CD4-positive, alpha-beta T cell (primary cell): ENCODE measurements at regions of chr1 and their contacts with region 1.

Region 1: DNA sequence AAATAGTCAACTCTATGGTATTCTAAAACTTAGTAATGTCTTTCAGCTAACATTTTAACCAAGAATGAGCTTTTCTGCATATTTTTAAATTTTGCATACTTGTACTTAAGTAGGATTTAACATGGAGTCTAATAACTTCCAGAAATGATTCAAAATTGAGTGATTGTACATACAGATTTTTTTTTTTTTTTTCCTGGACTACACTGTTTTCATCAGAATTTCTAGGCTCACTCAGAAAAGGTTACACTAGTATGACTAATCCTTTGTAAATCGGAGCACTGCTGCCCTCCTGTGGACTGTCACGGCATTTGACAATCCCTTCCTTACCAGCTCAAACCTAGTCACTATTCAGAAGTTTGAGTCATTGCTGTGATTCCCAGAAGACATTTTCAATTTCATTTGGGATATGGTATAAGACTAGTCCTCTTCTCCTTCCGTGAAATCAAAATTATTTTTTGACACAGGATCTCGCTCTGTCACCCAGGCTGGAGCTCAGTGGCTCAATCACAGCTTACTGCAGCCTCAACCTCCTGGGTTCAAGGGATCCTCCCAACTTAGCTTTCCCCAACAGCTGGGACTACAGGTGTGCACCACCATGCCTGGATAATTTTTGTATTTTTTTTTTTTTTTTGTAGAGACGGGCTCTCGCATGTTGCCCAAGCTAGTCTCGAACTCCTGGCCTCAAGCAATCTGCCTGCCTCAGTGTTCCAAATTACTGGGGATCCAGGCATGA is 45.5 kb downstream of the CD46 start:
- DNase-seq: peak; percentile 59 to 87 (median 74)
- ATAC-seq: peak; percentile 90
- H3K4me3 ChIP-seq: no peak overlapping the region
- H3K4me3 Mint-ChIP-seq: no peak overlapping the region
- H3K27ac ChIP-seq: no peak overlapping the region
- H3K27ac Mint-ChIP-seq: peak overlapping the region; percentile 50
- H3K4me1 ChIP-seq: peaks cover 24% of the 10 kb centered on the region
- H3K4me1 Mint-ChIP-seq: peaks cover 50% of the 10 kb centered on the region
- H3K27me3 ChIP-seq: no peaks in the 10 kb centered on the region
- H3K27me3 Mint-ChIP-seq: no peaks in the 10 kb centered on the region
- CTCF ChIP-seq: peak; percentile 85

Region 2: GRCh38 chr1:207654320-207654719 is 143.1 kb before region 1 on chr1:
- CTCF ChIA-PET with region 1: no interaction called
- POLR2A ChIA-PET with region 1: no interaction called
- intact Hi-C with region 1: loop called (anchors 5 to 10 kb)
- DNase-seq: no peak
- ATAC-seq: no peak
- H3K4me3 ChIP-seq: no peak overlapping the region
- H3K4me3 Mint-ChIP-seq: no peak overlapping the region
- H3K27ac ChIP-seq: no peak overlapping the region
- H3K27ac Mint-ChIP-seq: no peak overlapping the region
- H3K4me1 ChIP-seq: no peaks in the 10 kb centered on the region
- H3K4me1 Mint-ChIP-seq: no peaks in the 10 kb centered on the region
- H3K27me3 ChIP-seq: no peaks in the 10 kb centered on the region
- H3K27me3 Mint-ChIP-seq: peaks cover 13% of the 10 kb centered on the region
- CTCF ChIP-seq: no peak

Region 3: DNA sequence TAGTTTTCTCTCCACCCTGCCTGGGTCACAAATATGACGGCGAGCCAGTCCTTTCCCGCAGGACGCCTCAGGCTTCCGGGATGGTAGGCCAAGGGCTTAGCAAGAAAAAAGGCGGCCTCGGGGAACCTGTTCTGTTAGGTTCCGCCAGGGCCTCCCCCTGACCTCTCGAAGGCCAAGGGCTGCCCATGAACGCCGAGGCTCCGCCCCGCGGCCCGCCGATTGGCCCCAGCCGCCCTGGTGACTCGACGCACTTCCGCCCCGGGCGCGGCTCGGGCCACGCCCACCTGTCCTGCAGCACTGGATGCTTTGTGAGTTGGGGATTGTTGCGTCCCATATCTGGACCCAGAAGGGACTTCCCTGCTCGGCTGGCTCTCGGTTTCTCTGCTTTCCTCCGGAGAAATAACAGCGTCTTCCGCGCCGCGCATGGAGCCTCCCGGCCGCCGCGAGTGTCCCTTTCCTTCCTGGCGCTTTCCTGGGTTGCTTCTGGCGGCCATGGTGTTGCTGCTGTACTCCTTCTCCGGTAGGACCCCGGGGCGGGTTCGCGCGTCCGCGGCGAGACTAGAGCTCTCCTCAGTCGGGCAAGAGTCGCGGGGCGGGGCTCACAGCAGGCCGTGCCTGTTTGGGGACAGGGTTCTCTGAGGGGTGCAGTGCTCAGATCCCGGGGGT is 45.5 kb before region 1 on chr1 and contains the start of gene CD46:
- CTCF ChIA-PET with region 1: interaction called, 4 read pairs
- POLR2A ChIA-PET with region 1: no interaction called
- intact Hi-C with region 1: loop called in 1 of 2 experiments (anchors 5 kb)
- DNase-seq: peak; percentile 85 to 97 (median 92)
- ATAC-seq: peak; percentile 95
- H3K4me3 ChIP-seq: peak within 1 kb of the TSS; percentile 97
- H3K4me3 Mint-ChIP-seq: peak within 1 kb of the TSS; percentile 95
- H3K27ac ChIP-seq: peak within 1 kb of the TSS; percentile 66 to 85
- H3K27ac Mint-ChIP-seq: peak within 1 kb of the TSS; percentile 89
- H3K4me1 ChIP-seq: peaks cover 35% of the 10 kb centered on the region
- H3K4me1 Mint-ChIP-seq: peaks cover 84% of the 10 kb centered on the region
- H3K27me3 ChIP-seq: no peaks in the 10 kb centered on the region
- H3K27me3 Mint-ChIP-seq: no peaks in the 10 kb centered on the region
- CTCF ChIP-seq: no peak
- total RNA-seq, gene CD46: 111 to 115 TPM

Region 4: DNA sequence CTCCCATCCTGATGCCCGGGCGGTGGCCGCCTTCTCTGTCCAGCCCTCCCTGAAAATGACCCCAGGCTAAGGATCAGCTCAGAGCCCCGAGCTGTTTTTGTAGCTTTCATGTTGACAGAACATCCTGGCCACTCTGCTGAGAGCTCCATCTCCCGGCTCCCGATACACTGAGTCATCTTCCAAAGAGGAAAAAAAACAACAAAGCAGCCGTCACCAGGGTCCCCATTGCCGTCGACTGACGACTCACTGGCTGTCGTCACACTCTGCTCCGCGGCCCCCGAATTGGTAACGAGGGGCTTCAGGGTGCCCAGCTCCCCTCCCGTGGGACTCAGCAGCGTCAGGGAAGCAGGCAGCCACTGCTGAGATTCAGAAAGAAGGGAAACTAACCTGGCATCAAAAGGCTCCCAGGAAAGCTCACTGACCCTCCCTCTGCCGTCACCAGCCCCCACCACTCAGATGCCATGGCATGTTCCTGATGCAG is 21.6 kb after region 1 on chr1:
- CTCF ChIA-PET with region 1: interaction called, 26 read pairs
- POLR2A ChIA-PET with region 1: interaction called, 31 read pairs
- intact Hi-C with region 1: no loop called
- DNase-seq: no peak
- ATAC-seq: no peak
- H3K4me3 ChIP-seq: no peak overlapping the region
- H3K4me3 Mint-ChIP-seq: no peak overlapping the region
- H3K27ac ChIP-seq: no peak overlapping the region
- H3K27ac Mint-ChIP-seq: peak overlapping the region; percentile 73
- H3K4me1 ChIP-seq: peaks cover 90% of the 10 kb centered on the region
- H3K4me1 Mint-ChIP-seq: peaks cover 76% of the 10 kb centered on the region
- H3K27me3 ChIP-seq: no peaks in the 10 kb centered on the region
- H3K27me3 Mint-ChIP-seq: peaks cover 4% of the 10 kb centered on the region
- CTCF ChIP-seq: no peak

Region 5: GRCh38 chr1:207868774-207869721 is 71.7 kb after region 1 on chr1:
- CTCF ChIA-PET with region 1: interaction called, 11 read pairs
- POLR2A ChIA-PET with region 1: interaction called, 3 read pairs
- intact Hi-C with region 1: no loop called
- DNase-seq: peak; percentile 43 to 92 (median 67)
- ATAC-seq: peak; percentile 63
- H3K4me3 ChIP-seq: peak overlapping the region; percentile 98
- H3K4me3 Mint-ChIP-seq: peak overlapping the region; percentile 95
- H3K27ac ChIP-seq: peak overlapping the region; percentile 74 to 89
- H3K27ac Mint-ChIP-seq: peak overlapping the region; percentile 95
- H3K4me1 ChIP-seq: peaks cover 87% of the 10 kb centered on the region
- H3K4me1 Mint-ChIP-seq: peaks cover 85% of the 10 kb centered on the region
- H3K27me3 ChIP-seq: no peaks in the 10 kb centered on the region
- H3K27me3 Mint-ChIP-seq: no peaks in the 10 kb centered on the region
- CTCF ChIP-seq: peak; percentile 60

Region 6: DNA sequence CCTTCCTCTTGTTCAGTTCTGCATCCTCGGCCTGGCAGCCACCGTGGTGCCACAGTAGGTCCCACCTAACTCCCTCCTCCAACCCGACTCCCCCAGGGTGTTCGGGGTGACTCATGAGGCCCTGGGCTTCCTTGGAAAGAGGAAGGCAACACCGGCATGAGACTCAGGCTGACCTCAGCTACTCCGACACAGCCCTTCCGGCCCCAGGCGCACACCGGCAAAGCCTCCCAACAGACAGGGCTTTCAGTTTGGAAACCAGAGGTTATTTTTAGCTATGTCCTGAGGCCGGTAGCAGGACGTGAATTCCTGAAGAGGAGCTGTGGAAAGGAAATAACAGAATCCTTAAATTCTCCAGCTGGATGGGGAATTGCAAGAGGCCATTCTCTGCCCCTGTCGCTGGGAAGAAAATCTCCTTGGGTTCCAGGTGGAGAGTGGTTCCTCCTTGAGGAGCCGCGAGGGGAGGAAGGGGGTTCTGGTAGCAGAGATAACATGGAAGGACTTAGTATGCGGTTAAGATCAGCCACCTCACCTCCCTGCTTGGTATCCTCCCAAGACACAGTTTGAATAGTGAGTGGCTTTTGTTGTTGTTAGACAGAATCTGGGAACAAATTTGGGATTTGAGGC is 422.4 kb after region 1 on chr1:
- CTCF ChIA-PET with region 1: no interaction called
- POLR2A ChIA-PET with region 1: no interaction called
- intact Hi-C with region 1: no loop called
- DNase-seq: no peak
- ATAC-seq: no peak
- H3K4me3 ChIP-seq: no peak overlapping the region
- H3K4me3 Mint-ChIP-seq: no peak overlapping the region
- H3K27ac ChIP-seq: no peak overlapping the region
- H3K27ac Mint-ChIP-seq: no peak overlapping the region
- H3K4me1 ChIP-seq: no peaks in the 10 kb centered on the region
- H3K4me1 Mint-ChIP-seq: no peaks in the 10 kb centered on the region
- H3K27me3 ChIP-seq: peaks cover 0 to 2% of the 10 kb centered on the region in 2 experiments
- H3K27me3 Mint-ChIP-seq: peaks cover 9% of the 10 kb centered on the region
- CTCF ChIP-seq: no peak